MCF 10A (cell line): ENCODE measurements at regions of chr5 and their contacts with region 1.

Region 1: GRCh38 chr5:100664140-100664539 is 129.0 kb downstream of the FAM174A start:
- DNase-seq: no peak
- H3K4me3 Mint-ChIP-seq: no peak overlapping the region
- H3K27ac Mint-ChIP-seq: no peak overlapping the region
- H3K4me1 Mint-ChIP-seq: peaks cover 13% of the 10 kb centered on the region
- H3K27me3 Mint-ChIP-seq: no peaks in the 10 kb centered on the region
- CTCF ChIP-seq: no peak

Region 2: GRCh38 chr5:99605904-99606303 is 1058.2 kb before region 1 on chr5:
- CTCF ChIA-PET with region 1: no interaction called
- POLR2A ChIA-PET with region 1: no interaction called
- intact Hi-C with region 1: no loop called
- DNase-seq: no peak
- H3K4me3 Mint-ChIP-seq: no peak overlapping the region
- H3K27ac Mint-ChIP-seq: no peak overlapping the region
- H3K4me1 Mint-ChIP-seq: no peaks in the 10 kb centered on the region
- H3K27me3 Mint-ChIP-seq: peaks cover 81% of the 10 kb centered on the region
- CTCF ChIP-seq: no peak

Region 3: GRCh38 chr5:100647461-100648230 is 16.5 kb before region 1 on chr5:
- CTCF ChIA-PET with region 1: interaction called, 8 read pairs
- POLR2A ChIA-PET with region 1: interaction called, 18 read pairs
- intact Hi-C with region 1: no loop called
- DNase-seq: peak; percentile 78
- H3K4me3 Mint-ChIP-seq: peak overlapping the region; percentile 69
- H3K27ac Mint-ChIP-seq: peak overlapping the region; percentile 90
- H3K4me1 Mint-ChIP-seq: peaks cover 12% of the 10 kb centered on the region
- H3K27me3 Mint-ChIP-seq: no peaks in the 10 kb centered on the region
- CTCF ChIP-seq: no peak